MCF 10A (cell line): ENCODE measurements at regions of chr17 and their contacts with region 1.

Region 1: DNA sequence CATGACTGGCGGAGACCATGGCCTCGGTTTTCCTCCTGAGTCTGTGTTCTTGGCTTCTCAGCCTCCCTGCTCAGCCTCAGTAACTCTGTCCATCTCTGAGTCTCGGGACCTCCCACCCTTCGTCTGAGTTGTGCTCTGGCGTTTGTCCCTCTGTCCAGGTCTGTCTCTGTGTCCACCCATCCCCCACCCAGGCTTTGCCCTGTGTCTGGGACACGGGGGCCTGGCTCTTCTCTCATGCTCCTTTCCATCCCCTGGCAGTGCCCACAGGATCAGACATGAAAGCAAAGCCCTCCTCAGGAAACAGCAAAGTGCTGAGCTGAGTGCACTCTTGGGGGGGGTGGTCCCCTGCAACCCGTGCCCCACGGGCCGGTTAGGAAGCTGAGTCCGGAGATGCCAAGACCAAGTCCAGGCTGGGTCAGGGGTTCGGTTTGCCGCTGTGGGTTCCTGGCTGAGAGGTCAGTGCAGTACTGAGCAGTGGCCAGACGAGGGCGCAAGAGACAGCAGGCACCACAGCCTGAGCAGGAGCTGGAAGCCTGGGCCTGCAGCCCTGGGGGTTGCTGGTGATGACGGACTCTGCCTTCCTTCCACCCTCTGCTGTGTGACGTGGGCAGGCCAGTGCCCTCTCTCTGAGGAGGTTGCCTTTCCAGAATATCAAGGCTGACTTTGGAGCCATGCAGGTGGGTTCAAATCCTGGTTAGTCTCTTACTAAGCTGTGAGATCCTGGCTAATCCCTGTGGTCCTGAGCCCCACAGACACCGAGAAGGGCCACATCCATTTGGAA is 2.5 kb downstream of the P2RX1 start:
- DNase-seq: peak; percentile 65
- H3K4me3 Mint-ChIP-seq: no peak overlapping the region
- H3K27ac Mint-ChIP-seq: no peak overlapping the region
- H3K4me1 Mint-ChIP-seq: no peaks in the 10 kb centered on the region
- H3K27me3 Mint-ChIP-seq: no peaks in the 10 kb centered on the region
- CTCF ChIP-seq: peak; percentile 88

Region 2: DNA sequence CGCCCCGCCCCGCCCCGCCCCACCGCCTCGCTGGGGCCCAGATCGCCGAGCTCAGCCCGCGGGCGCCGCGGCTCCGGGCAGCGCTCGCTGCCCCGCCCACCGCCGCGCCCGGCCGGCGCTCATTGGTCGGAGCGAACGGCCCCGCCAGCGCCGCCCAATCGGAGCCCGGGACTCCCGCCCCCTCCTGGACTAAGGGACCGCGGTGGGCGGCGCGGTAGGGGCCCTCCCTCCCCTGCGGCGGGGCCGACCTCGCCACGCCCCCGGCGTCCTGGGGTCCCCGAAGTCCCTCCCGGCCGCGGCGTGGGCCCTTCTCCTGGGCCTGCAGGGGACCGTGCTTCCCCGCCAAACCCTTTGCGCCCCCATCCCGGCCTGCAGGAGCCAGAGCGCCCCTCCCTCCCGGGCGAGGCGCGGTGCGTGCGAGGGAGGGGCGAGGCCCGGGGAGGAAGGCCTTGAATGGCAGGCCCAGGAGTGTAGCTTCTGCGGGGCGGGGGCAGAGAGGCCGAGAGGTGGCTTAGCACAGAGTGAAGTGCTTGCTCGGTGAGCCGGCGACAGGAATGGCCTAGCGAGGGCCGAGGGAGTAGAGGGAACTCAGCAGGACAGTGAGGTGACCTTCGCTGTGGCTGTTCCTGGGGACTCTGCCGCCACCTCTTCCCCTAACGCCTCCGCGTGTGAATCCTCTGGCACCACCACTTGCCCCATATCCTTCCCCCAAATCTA is 20.6 kb before region 1 on chr17 and contains the start of gene CAMKK1:
- CTCF ChIA-PET with region 1: interaction called, 20 read pairs
- POLR2A ChIA-PET with region 1: no interaction called
- intact Hi-C with region 1: no loop called
- DNase-seq: peak; percentile 83
- H3K4me3 Mint-ChIP-seq: peak within 1 kb of the TSS; percentile 72
- H3K27ac Mint-ChIP-seq: no peak within 1 kb of the TSS
- H3K4me1 Mint-ChIP-seq: peaks cover 38% of the 10 kb centered on the region
- H3K27me3 Mint-ChIP-seq: no peaks in the 10 kb centered on the region
- CTCF ChIP-seq: no peak
- total RNA-seq, gene CAMKK1: 3.8 and 4.3 TPM in 2 replicates

Region 3: GRCh38 chr17:3935140-3935542 is 21.4 kb after region 1 on chr17:
- CTCF ChIA-PET with region 1: interaction called, 10 read pairs
- POLR2A ChIA-PET with region 1: no interaction called
- intact Hi-C with region 1: no loop called
- DNase-seq: peak; percentile 78
- H3K4me3 Mint-ChIP-seq: no peak overlapping the region
- H3K27ac Mint-ChIP-seq: no peak overlapping the region
- H3K4me1 Mint-ChIP-seq: no peaks in the 10 kb centered on the region
- H3K27me3 Mint-ChIP-seq: no peaks in the 10 kb centered on the region
- CTCF ChIP-seq: peak; percentile 54

Region 4: DNA sequence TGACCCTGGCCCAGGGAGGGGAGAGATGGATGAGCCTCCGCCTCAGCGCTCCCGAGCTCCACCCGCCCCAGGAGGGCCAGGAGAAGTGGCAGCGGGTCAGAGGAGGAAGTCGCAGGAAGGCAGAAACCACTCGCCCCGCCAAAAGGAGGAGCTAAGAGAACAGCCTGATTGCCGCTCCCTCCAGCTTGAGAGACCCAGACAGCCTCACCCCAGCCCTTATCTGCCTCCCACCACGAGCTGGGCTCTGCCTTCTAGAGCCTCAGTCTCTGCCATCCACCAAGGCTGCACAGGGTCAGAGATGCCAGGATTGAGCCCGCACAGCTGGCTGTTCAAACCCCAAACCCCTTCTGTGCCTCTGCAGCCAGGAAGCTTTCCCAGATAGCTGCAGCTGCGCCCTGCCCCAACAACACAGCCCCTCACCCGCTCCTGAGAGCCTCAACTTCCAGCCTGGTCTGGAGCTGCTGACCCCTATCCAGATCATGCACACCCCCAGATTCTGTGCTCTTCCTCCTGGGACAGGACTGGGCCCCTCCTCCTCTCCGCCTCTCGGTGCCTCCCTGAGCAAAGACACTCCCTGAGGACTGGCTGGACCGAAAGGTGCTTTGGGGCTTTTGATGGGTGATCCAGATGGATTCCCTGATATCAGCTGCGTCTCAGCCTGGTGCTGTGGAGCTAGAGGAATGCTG is 51.5 kb after region 1 on chr17:
- CTCF ChIA-PET with region 1: no interaction called
- POLR2A ChIA-PET with region 1: no interaction called
- intact Hi-C with region 1: no loop called
- DNase-seq: peak; percentile 66
- H3K4me3 Mint-ChIP-seq: peak overlapping the region; percentile 62
- H3K27ac Mint-ChIP-seq: no peak overlapping the region
- H3K4me1 Mint-ChIP-seq: peaks cover 7% of the 10 kb centered on the region
- H3K27me3 Mint-ChIP-seq: peaks cover 12% of the 10 kb centered on the region
- CTCF ChIP-seq: no peak

Region 5: GRCh38 chr17:4026255-4026654 is 112.5 kb after region 1 on chr17:
- CTCF ChIA-PET with region 1: interaction called, 17 read pairs
- POLR2A ChIA-PET with region 1: no interaction called
- intact Hi-C with region 1: no loop called
- DNase-seq: no peak
- H3K4me3 Mint-ChIP-seq: no peak overlapping the region
- H3K27ac Mint-ChIP-seq: no peak overlapping the region
- H3K4me1 Mint-ChIP-seq: no peaks in the 10 kb centered on the region
- H3K27me3 Mint-ChIP-seq: no peaks in the 10 kb centered on the region
- CTCF ChIP-seq: no peak

Region 6: DNA sequence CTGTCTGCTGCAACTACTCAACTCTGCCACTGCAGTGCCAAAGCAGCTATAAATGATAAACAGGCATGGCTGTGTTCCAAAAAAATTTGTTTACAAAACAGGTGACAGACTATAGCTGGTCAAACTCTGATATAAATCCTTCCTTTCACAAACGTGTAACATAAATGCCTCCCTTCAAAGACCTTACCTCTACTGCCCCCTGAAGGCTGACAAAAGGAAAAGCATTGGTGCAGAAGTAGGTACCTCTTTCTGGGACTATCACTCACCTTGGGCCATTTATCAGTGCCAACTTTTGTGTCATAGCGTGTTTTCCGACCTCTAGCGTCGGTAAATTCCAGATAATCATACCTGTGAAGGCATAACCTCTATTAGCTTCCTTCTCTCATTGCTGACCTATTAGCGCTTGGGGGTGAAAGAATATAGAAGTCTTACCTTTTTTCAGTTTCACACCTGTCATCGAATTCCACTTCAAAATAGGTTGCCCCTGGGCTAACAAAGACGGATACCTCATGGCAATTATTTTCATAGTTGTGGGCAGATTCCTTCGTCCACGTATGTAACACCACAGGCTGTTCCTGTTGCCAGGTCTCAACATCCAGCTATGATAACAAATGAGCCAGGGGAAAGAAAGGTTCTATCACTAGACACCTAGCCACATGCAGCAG is 161.2 kb after region 1 on chr17:
- CTCF ChIA-PET with region 1: interaction called, 29 read pairs
- POLR2A ChIA-PET with region 1: no interaction called
- intact Hi-C with region 1: loop called (anchors 1 kb)
- DNase-seq: peak; percentile 71
- H3K4me3 Mint-ChIP-seq: no peak overlapping the region
- H3K27ac Mint-ChIP-seq: no peak overlapping the region
- H3K4me1 Mint-ChIP-seq: no peaks in the 10 kb centered on the region
- H3K27me3 Mint-ChIP-seq: no peaks in the 10 kb centered on the region
- CTCF ChIP-seq: peak; percentile 58

Region 7: DNA sequence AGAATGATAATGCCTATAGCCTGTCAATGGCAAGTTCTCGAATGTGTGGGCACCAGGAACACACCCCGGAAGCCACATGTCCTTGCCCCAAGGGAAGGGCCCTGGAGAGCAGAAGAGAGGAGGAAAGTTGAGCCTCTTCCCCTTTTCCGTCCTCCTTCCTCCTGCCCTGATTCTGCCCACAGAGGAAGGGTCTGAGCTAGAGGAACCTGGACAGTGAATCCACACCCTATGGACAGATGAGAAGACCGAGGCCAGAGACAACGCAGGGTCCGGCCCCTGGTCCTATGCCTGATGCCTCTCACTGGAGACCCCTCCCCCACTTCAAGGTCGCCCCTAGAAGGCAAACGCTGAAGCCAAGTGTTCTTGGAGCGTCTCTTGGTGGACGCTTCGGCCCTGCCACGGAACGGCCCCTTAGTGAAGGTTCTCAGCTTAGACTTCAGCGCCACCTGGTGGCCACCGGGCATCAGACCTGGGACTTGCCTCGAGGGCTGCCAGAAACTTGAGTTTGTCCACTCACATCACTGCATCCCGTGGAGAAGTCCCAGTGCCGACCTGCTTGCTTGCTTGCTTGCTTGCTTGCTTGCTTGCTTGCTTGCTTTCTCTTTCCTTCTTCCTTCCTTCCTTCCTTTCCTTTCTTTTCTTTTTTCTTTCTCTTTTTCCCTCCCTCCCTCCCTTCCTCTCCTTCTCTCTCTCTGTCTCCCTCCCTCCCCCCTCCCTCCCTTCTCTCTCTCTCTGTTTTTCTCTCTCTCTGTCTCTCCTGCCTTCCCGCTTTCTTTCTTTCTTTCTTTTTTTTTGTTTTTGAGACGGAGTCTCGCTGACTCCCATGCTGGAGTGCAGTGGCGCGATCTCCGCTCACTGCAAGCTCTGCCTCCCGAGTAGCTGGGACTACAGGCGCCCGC is 499.5 kb after region 1 on chr17:
- CTCF ChIA-PET with region 1: interaction called, 9 read pairs
- POLR2A ChIA-PET with region 1: no interaction called
- intact Hi-C with region 1: loop called (anchors 2 kb)
- DNase-seq: peak; percentile 83
- H3K4me3 Mint-ChIP-seq: no peak overlapping the region
- H3K27ac Mint-ChIP-seq: no peak overlapping the region
- H3K4me1 Mint-ChIP-seq: peaks cover 9% of the 10 kb centered on the region
- H3K27me3 Mint-ChIP-seq: no peaks in the 10 kb centered on the region
- CTCF ChIP-seq: peak; percentile 90